ENCODE measurements at regions of chr3 and their contacts with region 1.

Region 1: DNA sequence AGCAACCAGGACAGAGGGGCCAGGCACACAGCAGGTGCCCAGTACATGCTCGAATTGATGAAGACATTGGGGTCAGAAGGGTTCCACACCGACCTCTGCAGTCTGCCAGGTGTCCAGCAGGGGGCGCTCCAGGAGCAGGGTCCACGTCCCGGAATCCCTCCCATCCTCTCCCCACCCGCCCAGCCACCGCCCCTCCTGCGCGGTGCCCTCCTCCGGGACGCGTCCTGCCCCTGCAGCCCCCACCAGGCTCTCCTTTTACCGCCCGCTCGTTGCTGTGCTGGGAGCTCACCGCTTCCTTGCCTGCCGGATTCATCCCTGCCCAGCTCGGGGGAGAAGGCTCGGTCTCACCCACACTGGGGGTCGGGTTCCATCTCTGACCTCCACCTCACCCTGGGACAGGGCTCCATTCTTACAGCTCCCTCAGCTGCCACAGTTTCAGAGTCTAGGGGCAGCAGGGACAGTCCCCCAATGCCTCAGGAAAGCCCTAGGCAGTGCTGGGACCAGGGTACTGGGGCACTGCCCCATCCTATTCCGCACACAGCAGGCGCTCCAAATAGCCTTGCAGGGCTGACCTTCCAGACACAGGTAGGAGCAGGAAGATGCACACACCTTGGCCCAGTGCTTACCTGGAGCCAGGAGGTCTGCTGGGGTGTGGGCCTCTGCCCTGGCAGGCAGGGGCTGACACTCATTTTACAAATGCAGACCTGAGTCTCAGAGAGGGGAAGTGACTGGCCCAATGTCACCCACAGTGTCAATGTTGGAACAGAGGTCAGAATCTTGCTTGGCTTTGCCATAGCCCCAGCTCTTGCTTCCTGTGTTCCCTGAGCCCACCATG is 31.0 kb downstream of the GRIP2 start:
- DNase-seq: peak; percentile 82
- H3K4me3 Mint-ChIP-seq: no peak overlapping the region
- H3K27ac Mint-ChIP-seq: no peak overlapping the region
- H3K4me1 Mint-ChIP-seq: no peaks in the 10 kb centered on the region
- H3K27me3 Mint-ChIP-seq: peaks cover 31% of the 10 kb centered on the region
- CTCF ChIP-seq: peak; percentile 92

Region 2: DNA sequence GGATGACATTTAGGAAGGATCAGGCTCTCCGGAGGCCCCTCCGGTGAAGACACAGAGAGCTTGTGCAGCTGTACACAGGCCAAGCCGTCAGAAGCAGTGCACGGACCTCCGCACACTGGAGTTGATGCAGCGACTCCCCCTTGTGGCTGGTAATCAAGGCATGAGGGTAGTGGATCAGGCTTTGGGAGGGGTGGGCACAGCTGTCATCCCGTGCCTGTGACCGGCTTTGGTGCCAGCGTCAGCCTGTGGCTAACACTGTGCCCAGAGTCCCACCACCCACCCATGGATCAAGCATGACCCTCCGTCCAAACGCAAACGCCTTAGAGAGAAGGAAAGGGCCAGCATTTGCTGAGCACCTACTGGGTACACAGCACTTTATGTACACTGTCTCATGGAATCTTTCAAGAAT is 39.1 kb after region 1 on chr3:
- CTCF ChIA-PET with region 1: interaction called, 9 read pairs
- intact Hi-C with region 1: loop called (anchors 1 kb)
- DNase-seq: peak; percentile 59
- H3K4me3 Mint-ChIP-seq: no peak overlapping the region
- H3K27ac Mint-ChIP-seq: no peak overlapping the region
- H3K4me1 Mint-ChIP-seq: peaks cover 14% of the 10 kb centered on the region
- H3K27me3 Mint-ChIP-seq: peaks cover 68% of the 10 kb centered on the region
- CTCF ChIP-seq: peak; percentile 53

Region 3: DNA sequence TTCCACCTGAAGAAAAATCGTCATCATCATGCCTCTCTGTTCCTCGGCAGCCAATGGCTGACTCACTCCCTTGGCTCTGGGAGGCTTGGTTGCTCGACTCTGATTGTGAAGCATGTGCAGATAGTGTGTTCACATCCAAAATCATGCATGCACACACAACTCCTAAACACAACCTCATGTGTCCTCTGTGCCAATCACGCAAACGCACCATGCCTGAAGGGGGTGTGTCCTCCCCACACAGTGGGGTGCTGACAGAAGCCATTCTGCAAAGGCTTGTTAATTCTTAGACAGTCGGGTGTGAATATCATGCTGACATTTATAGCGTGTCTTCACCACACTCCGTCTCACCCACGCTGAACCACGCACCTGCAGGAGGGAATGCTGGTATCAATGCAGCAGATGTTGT is 131.0 kb after region 1 on chr3:
- CTCF ChIA-PET with region 1: no interaction called
- intact Hi-C with region 1: loop called (anchors 10 kb)
- DNase-seq: peak; percentile 11
- H3K4me3 Mint-ChIP-seq: peak overlapping the region; percentile 30
- H3K27ac Mint-ChIP-seq: no peak overlapping the region
- H3K4me1 Mint-ChIP-seq: peaks cover 10% of the 10 kb centered on the region
- H3K27me3 Mint-ChIP-seq: peaks cover 46% of the 10 kb centered on the region
- CTCF ChIP-seq: no peak

Region 4: DNA sequence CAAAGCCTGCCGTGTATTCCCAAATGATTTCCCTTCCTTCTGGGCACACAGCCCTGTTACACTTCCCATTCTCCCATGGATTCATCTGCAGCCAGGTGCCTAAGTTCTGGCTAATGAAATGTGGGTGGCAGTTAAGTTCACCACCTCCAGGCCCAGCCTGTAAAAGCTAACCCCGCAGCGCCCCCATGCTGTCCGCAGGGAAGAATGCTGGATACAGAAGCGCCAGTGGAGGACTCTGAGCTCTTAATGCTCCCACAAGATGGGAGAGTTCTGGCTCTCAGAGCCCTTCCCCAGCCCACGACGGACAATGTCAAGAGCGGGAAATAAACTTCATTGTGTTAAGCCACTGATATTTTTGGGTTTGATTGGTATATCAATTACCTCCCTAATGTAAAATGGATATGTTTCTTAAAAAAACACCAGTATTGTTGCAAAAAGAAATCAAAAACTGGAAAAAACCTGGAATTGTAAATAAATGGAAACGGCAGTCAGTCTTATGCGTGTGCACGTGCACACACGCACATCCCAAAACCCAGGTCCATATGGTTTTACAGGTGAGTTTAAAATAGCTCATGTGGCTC is 271.8 kb after region 1 on chr3:
- CTCF ChIA-PET with region 1: no interaction called
- intact Hi-C with region 1: loop called (anchors 5 kb)
- DNase-seq: peak; percentile 77
- H3K4me3 Mint-ChIP-seq: no peak overlapping the region
- H3K27ac Mint-ChIP-seq: no peak overlapping the region
- H3K4me1 Mint-ChIP-seq: no peaks in the 10 kb centered on the region
- H3K27me3 Mint-ChIP-seq: peaks cover 37% of the 10 kb centered on the region
- CTCF ChIP-seq: no peak